ENCODE measurements at regions of chr6 and their contacts with region 1.

Region 1: DNA sequence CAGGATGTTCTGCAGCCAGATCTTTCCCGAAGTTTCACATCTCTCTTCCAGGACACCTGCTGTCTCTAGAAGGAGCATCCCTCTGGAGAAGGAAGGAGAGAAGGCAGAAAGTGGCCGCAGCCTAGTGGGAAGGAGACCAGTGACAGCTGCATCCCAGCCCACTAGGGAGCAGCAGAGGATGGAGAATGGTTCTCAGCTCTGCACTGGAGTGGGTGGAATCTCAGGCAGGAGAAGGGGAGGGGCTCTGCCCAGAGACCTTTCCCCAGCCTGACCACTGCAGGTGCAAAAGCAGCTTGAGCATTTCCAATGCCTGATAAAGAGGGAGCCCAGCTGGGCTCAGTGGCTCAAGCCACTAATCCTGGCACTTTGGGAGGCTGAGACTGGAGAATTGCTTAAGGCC is 32.3 kb downstream of the NCR2 start:
- DNase-seq: peak in 4 of 5 donors; percentile 87 to 93 (median 88)
- H3K4me3 ChIP-seq: no peak overlapping the region
- H3K27ac ChIP-seq: no peak overlapping the region
- H3K4me1 ChIP-seq: peaks cover 0 to 13% (median 8%) of the 10 kb centered on the region in 3 donors
- H3K27me3 ChIP-seq: peaks cover 11% of the 10 kb centered on the region
- CTCF ChIP-seq: peak; percentile 50

Region 2: DNA sequence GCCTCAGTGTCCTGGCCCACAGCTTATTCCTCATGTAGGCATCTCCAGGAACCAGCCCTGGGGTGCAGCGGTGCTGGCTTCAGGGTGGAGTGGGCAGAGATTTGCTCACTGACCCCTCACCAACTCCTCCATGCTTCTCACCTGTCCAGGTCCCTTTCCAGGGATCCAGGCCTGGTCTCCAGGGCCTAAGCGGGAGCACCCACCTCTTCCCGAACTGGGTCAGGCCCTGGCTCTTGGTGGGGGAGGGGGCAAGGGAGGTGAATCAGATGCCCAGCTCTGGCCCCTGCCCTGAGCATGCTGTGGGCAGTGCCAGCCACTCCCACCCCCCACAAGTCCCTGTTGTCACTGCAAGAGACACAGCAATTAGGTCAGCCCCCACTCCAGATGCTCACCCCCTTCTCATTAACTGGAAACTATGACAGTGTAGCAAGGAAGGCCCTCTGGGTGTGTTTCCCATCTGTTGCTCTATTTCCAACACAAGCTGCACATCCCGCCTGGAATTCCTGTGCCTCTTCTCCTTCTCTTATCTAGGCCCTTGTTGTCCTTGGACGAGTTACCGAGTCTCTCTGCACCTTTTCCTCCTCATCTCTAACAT is 307.6 kb after region 1 on chr6:
- intact Hi-C with region 1: loop called (anchors 5 kb)
- DNase-seq: peak in 2 of 5 donors; percentile 36 to 48
- H3K4me3 ChIP-seq: no peak overlapping the region
- H3K27ac ChIP-seq: no peak overlapping the region
- H3K4me1 ChIP-seq: no peaks in the 10 kb centered on the region
- H3K27me3 ChIP-seq: no peaks in the 10 kb centered on the region
- CTCF ChIP-seq: no peak

Measured in kidney (tissue), 22 donors.